Dendritic cell treated with granulocyte-macrophage colony-stimulating factor and Interleukin-4, amounts not matched to agents 40 ng/mL and 50 ng/mL, for 4 days (primary cell): ENCODE measurements at regions of chr22 and their contacts with region 1.

Region 1: GRCh38 chr22:29387921-29388758 is at the start of gene AP1B1:
- H3K4me3 Mint-ChIP-seq: peak within 1 kb of the TSS; percentile 95
- H3K27ac Mint-ChIP-seq: peak within 1 kb of the TSS; percentile 88
- H3K4me1 Mint-ChIP-seq: peaks cover 67% of the 10 kb centered on the region
- H3K27me3 Mint-ChIP-seq: no peaks in the 10 kb centered on the region

Region 2: DNA sequence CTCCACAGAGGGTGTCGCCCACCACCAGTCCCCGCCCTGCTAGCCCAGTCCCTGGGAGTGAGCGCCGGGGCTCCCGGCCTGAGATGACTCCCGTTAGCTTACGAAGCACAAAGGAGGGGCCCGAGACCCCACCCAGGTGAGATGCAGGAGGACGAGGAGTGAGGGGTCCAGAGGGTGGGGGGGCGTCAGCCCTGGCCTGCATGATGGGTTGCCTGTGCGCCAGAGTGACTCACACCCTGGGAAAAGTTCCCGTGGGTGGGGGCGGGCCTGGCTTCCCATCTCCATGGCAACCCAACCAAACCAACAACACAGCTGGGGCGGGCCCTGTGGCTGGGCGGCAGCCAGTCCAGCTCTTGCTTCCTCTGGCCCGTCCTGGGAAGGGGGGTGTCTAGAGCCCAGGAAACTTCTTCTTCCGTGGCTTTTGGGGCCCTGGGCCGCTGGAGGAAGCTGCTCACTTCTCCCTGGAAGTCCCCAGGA is 77.2 kb before region 1 on chr22:
- intact Hi-C with region 1: loop called (anchors 5 kb)
- H3K4me3 Mint-ChIP-seq: peak overlapping the region; percentile 26
- H3K27ac Mint-ChIP-seq: peak overlapping the region; percentile 82
- H3K4me1 Mint-ChIP-seq: peaks cover 81% of the 10 kb centered on the region
- H3K27me3 Mint-ChIP-seq: peaks cover 27% of the 10 kb centered on the region

Region 3: DNA sequence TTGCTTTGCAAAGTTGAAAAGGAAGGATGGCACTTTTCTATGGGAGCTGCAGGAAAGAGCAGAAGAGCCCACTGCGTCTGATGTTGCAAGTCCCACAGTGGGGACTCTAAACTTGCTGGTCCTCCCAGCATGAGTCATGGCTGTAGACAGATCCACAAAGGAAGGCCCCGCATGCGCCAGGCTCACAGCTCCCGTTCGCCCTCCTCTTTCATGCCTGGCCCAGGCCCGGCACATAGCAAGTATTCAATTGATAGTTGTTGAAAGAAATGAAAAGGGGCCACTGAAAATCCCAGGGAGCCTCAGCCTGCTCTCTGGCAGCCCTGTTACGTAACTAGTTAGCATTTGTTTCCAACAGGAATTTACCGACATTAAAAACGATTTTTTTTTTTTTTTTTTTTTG is 18.7 kb before region 1 on chr22:
- intact Hi-C with region 1: loop called (anchors 2 kb)
- H3K4me3 Mint-ChIP-seq: peak overlapping the region; percentile 17
- H3K27ac Mint-ChIP-seq: peak overlapping the region; percentile 79
- H3K4me1 Mint-ChIP-seq: peaks cover 90% of the 10 kb centered on the region
- H3K27me3 Mint-ChIP-seq: no peaks in the 10 kb centered on the region

Region 4: GRCh38 chr22:29478326-29479276 is 90.5 kb after region 1 on chr22:
- intact Hi-C with region 1: loop called (anchors 5 kb)
- H3K4me3 Mint-ChIP-seq: peak overlapping the region; percentile 59
- H3K27ac Mint-ChIP-seq: peak overlapping the region; percentile 7
- H3K4me1 Mint-ChIP-seq: peaks cover 38% of the 10 kb centered on the region
- H3K27me3 Mint-ChIP-seq: peaks cover 74% of the 10 kb centered on the region